ENCODE measurements at regions of chr19 and their contacts with region 1.

Region 1: GRCh38 chr19:55632463-55632834 is 8.1 kb upstream of the ZNF784 start:
- DNase-seq: peak; percentile 88
- H3K4me3 Mint-ChIP-seq: peak overlapping the region; percentile 6
- H3K27ac Mint-ChIP-seq: peak overlapping the region; percentile 34
- H3K4me1 Mint-ChIP-seq: peaks cover 53% of the 10 kb centered on the region
- H3K27me3 Mint-ChIP-seq: peaks cover 7% of the 10 kb centered on the region

Region 2: GRCh38 chr19:55467236-55468053 is 165.0 kb before region 1 on chr19:
- CTCF ChIA-PET with region 1: interaction called, 10 read pairs
- POLR2A ChIA-PET with region 1: no interaction called
- DNase-seq: peak; percentile 73
- H3K4me3 Mint-ChIP-seq: no peak overlapping the region
- H3K27ac Mint-ChIP-seq: no peak overlapping the region
- H3K4me1 Mint-ChIP-seq: peaks cover 6% of the 10 kb centered on the region
- H3K27me3 Mint-ChIP-seq: peaks cover 2% of the 10 kb centered on the region

Region 3: DNA sequence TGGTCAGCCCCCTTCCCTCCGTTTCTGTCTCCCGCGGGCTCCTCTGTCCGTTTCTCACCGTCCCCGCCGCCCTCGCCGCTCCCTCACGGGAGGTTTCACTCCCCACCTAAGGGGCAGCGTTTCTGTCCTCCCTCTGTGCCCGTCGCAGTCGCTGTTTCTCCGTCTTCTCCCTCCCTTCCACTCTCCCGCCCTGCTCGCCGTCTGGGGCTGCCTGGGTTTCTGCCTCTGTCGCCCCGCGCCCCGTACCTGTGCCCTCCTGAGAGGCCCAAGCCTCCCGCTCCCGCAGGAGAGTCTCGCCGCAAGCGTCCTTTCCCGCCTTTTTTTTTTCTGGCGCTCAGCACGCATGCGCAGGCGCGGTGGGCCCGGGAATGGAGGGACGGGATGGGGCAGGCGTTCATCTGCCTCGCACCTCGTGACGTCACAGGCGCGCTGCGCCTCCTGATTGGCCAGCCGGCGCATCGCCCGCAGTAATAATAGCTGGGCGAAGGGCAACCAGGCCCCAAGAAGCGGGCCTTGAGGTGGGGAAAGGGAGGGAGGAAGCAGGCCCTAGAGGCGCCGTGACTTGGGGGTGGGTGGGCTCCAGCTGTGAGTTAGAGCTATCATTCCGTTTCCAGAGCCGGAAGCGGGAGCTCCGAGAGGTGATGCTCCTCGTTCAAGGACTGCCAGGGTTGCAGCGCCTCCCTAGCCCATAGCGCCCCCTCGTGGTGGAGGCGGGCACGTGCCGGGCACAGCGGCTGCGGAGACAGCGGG is 128.8 kb before region 1 on chr19:
- CTCF ChIA-PET with region 1: interaction called, 40 read pairs
- POLR2A ChIA-PET with region 1: interaction called, 3 read pairs
- DNase-seq: peak; percentile 93
- H3K4me3 Mint-ChIP-seq: peak overlapping the region; percentile 72
- H3K27ac Mint-ChIP-seq: peak overlapping the region; percentile 64
- H3K4me1 Mint-ChIP-seq: peaks cover 28% of the 10 kb centered on the region
- H3K27me3 Mint-ChIP-seq: peaks cover 10% of the 10 kb centered on the region

Region 4: DNA sequence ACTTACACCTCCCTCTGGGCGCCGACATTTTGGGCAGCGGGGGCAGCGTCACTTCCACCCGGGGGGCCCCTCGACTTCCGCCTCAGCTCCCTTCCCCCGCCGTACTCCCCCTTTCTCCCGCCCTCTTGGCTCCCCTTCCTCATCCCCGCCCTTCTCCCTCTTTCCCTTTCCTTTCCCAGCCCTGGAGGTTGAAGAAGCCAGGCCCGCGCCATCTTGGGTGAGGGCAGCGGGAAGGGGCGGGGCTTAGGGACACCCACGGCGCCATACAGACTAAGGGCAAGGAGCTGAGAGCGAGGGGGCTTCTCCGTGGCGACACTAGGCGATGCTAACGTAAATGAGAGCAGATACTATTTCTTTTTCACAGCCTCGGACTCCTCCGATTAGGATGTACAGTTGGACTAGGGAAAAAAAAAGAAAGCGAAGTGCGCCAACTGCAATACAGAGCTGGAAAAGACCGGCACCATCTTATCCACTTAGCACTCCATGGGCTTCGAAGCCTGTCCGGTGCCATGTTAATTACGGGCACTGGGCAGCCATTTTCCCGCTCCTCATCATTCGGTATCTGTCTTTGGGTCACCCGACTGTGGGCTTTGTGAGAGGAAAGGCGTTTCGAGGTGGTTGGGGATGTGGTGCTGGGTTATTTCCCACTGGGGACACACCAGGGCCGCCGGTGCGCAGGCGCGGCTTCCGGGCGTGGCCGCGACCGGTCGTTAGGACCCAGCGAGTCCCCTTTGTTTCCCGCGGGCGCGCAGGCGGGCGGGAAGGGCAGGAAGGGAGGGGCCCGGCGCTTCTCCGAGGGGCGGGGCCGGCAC is 32.8 kb before region 1 on chr19 and contains the start of gene FIZ1:
- CTCF ChIA-PET with region 1: interaction called, 17 read pairs
- POLR2A ChIA-PET with region 1: interaction called, 53 read pairs
- DNase-seq: peak; percentile 97
- H3K4me3 Mint-ChIP-seq: peak within 1 kb of the TSS; percentile 98
- H3K27ac Mint-ChIP-seq: peak within 1 kb of the TSS; percentile 99
- H3K4me1 Mint-ChIP-seq: peaks cover 35% of the 10 kb centered on the region
- H3K27me3 Mint-ChIP-seq: no peaks in the 10 kb centered on the region
- total RNA-seq, gene FIZ1: 10.9 to 11.7 TPM

Region 5: DNA sequence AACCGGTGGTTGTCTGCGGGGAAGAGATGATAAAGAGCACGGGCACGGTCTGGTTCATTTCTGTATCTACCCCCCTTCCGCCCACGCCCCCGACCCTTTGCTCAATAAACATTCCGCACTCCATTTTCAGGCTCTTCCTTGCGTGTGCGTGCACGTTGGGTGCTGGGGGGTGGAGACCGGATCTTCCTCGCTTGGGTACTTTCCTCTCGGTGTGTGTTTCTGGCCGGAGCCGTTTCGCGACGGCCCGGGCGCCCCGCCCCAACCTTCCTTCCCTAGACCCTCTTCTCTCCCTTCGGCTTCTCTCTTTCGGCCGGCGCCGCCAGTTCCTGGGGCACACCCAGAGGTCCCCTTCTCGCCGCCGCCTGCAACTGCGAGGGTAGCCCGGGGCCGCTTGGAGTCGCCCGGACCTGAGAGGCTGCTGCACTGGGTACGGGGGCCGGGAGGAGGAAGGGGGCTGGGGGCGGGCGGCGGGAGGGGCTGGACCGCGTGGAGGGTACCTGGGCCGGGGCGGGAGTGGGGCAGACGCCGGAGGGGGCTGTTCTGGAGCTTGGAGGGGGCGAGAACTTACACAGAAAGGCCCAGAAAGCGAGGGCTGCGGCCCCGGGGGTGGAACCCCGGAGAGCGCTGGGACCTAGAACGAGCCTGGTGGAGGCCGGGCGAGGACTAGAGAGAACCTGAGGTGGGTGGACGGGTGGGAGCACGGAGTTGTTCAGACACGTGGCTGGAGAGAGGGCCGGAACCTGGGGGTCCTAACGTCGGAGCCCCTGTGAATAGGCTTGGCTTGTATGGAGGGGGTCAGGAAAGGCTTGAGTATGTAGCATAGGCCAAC is 11.1 kb after region 1 on chr19 and contains the start of gene ZNF581:
- CTCF ChIA-PET with region 1: interaction called, 19 read pairs
- POLR2A ChIA-PET with region 1: interaction called, 12 read pairs
- DNase-seq: peak; percentile 78
- H3K4me3 Mint-ChIP-seq: peak within 1 kb of the TSS; percentile 86
- H3K27ac Mint-ChIP-seq: peak within 1 kb of the TSS; percentile 94
- H3K4me1 Mint-ChIP-seq: peaks cover 54% of the 10 kb centered on the region
- H3K27me3 Mint-ChIP-seq: no peaks in the 10 kb centered on the region
- total RNA-seq, gene ZNF581: 26.6 to 30.1 TPM

Region 6: DNA sequence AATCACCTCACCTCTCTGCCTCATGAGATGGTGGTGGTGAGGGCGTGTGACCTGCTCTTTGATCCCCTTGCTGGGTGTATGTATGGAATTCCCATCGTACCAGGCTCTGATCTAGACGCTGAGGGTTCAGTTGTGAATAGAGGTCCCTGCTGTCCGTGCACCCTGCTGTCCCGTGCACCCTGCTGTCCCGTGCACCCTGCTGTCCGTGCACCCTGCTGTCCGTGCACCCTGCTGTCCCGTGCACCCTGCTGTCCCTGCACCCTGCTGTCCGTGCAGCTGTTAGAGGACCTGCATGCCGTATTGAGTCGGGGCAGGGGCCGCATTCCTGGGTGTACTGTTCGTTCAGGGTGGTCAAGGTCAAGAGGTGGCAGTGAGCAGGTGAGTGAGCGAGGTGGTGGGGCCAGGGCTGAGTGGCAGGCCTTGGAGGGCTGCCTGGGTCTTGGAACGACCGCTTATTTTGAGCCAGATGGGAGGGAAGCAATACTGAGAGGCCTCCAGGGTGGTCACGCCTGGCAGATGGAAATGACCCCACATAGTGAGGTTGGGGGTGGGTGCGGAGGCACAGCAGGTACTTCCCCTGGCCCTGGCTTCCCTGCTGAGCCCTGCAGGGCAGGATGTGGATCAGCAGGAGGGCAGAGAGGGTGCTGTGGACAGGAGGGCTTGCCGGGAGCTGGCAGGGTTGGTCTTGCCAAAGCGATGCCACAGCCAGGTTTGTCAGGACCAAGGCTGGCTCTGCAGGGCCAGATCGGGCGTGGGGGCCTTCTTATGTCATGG is 38.0 kb after region 1 on chr19:
- CTCF ChIA-PET with region 1: interaction called, 10 read pairs
- POLR2A ChIA-PET with region 1: interaction called, 4 read pairs
- DNase-seq: no peak
- H3K4me3 Mint-ChIP-seq: no peak overlapping the region
- H3K27ac Mint-ChIP-seq: no peak overlapping the region
- H3K4me1 Mint-ChIP-seq: peaks cover 30% of the 10 kb centered on the region
- H3K27me3 Mint-ChIP-seq: no peaks in the 10 kb centered on the region

Measured in activated CD4-positive, alpha-beta memory T cell treated with anti-CD3 and anti-CD28 coated beads, Interleukin-2, amount 10 ng/mL, durations not matched to agents 7 days and 5 days (primary cell).